CD4-positive, alpha-beta T cell (primary cell): ENCODE measurements at regions of chr19 and their contacts with region 1.

Region 1: DNA sequence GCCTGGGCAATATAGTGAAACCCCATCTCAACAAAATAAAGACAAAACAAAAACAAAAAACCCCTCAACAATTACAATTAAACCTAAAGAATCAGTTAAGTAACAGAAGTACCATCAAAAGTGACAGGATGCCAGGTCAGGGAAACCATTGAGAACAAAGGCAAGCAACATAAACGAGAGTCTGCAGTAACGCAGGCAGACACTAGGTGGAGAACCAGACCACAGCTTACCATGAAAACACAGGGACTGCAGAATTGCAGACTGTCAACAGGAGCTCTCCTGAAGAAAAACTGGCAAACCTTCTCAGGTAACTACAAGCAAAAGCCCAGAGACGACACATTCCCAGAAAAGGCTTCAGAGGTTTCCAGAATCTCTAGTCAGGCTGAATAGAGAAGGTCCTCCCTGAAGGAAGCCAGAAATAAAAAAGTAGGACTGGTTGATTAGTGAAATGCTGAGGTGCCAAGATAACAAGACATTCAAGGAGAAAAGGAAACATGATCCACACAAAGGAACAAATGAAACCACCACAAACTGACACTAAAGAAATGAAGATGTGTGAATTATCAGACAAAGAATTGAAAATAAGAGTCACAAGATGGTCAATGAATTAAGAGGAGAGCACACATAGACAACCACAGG is 2.2 kb upstream of the ZNF665 start:
- DNase-seq: peak; percentile 53 to 89 (median 66)
- ATAC-seq: peak; percentile 59
- H3K4me3 ChIP-seq: no peak overlapping the region
- H3K4me3 Mint-ChIP-seq: peak overlapping the region; percentile 95
- H3K27ac ChIP-seq: no peak overlapping the region
- H3K27ac Mint-ChIP-seq: peak overlapping the region; percentile 92
- H3K4me1 ChIP-seq: peaks cover 28% of the 10 kb centered on the region
- H3K4me1 Mint-ChIP-seq: peaks cover 42% of the 10 kb centered on the region
- H3K27me3 ChIP-seq: peaks cover 0 to 2% of the 10 kb centered on the region in 2 experiments
- H3K27me3 Mint-ChIP-seq: no peaks in the 10 kb centered on the region
- CTCF ChIP-seq: peak; percentile 97

Region 2: DNA sequence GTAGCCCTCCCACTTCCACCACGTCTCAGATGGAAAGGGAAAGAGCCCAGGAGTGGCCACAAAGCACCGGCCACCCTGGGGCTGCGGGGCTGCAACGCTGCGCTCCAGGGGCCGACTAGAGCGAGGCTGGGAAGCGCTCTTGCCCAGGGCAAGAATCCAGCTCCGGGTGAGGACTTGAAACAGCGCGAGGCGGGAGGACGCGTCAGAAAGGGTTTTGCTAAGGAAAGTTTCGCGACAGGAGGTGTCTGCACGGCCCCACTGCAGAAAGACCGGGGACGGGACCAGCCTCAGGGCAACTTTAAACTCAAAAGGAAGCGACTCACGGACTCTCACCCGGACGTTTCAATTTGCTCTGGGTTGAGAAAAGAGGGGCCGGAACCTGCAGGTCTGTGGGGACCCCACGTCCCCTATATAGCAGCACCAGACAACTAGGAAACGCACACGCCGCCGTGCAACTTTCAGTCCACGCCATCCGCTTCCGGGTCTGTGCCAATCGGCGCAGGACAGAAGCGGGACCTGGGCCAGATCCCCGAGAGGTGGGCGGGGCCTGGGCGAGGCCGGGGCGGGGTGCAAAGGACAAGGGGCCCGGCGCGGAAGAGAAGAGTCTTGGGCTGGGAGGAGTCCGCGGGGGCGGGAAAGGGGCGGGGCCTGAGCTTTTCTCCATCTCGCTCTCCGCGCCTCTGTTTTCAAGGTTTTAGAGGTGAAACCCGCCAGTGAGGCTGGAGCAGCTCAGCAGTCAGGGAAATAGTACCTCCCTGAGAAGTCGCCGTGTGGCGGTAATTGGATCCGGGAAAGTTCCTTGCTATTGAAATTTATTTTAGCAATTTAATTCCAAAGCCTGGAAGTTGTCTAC is 232.8 kb before region 1 on chr19 and contains the start of gene ZNF816:
- CTCF ChIA-PET with region 1: interaction called, 3 read pairs
- POLR2A ChIA-PET with region 1: no interaction called
- intact Hi-C with region 1: loop called in 1 of 2 experiments (anchors 1 kb)
- DNase-seq: peak; percentile 97 to 100 (median 99)
- ATAC-seq: peak; percentile 99
- H3K4me3 ChIP-seq: peak within 1 kb of the TSS; percentile 78
- H3K4me3 Mint-ChIP-seq: peak within 1 kb of the TSS; percentile 97
- H3K27ac ChIP-seq: peak within 1 kb of the TSS; percentile 63 to 68
- H3K27ac Mint-ChIP-seq: peak within 1 kb of the TSS; percentile 97
- H3K4me1 ChIP-seq: peaks cover 20% of the 10 kb centered on the region
- H3K4me1 Mint-ChIP-seq: peaks cover 36% of the 10 kb centered on the region
- H3K27me3 ChIP-seq: no peaks in the 10 kb centered on the region
- H3K27me3 Mint-ChIP-seq: no peaks in the 10 kb centered on the region
- CTCF ChIP-seq: no peak
- total RNA-seq, gene ZNF816: 3.6 to 5.5 TPM

Region 3: DNA sequence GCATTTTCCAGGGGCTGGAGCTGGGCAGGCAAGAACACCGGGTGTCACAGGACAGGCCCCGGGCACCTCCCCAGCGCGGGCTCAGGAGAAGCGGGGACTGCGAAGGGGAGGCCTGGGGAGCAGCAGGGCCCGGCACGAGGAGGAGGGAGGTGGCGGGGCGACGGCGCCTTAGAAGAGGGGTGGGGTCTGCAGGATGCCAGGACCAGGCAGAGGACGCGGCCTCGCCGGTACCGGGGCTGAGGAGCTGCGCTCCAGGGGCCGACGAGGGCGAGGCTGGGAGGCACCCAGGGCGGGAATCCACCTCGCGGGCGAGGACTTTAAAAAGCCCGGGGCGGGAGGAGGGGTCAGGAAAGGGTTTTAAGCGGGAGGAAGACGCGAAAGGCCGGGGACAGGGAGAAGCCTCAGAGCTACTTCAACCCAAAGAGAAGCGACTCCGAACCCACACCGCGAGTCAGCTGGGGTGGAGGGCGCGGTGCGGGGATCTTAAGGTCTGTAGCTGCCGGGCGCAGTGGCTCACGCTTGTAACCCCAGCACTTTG is 37.2 kb before region 1 on chr19:
- CTCF ChIA-PET with region 1: interaction called, 4 read pairs
- POLR2A ChIA-PET with region 1: interaction called, 7 read pairs
- intact Hi-C with region 1: loop called in 1 of 2 experiments (anchors 1 kb)
- DNase-seq: peak in 13 of 14 experiments; percentile 1 to 66 (median 9)
- ATAC-seq: peak; percentile 33
- H3K4me3 ChIP-seq: peak overlapping the region; percentile 71
- H3K4me3 Mint-ChIP-seq: peak overlapping the region; percentile 92
- H3K27ac ChIP-seq: peak overlapping the region; percentile 44 to 56
- H3K27ac Mint-ChIP-seq: peak overlapping the region; percentile 82
- H3K4me1 ChIP-seq: peaks cover 19% of the 10 kb centered on the region
- H3K4me1 Mint-ChIP-seq: peaks cover 26% of the 10 kb centered on the region
- H3K27me3 ChIP-seq: peaks cover 0 to 3% of the 10 kb centered on the region in 2 experiments
- H3K27me3 Mint-ChIP-seq: no peaks in the 10 kb centered on the region
- CTCF ChIP-seq: no peak

Region 4: GRCh38 chr19:53365134-53365898 is 169.9 kb after region 1 on chr19 and contains the start of gene ZNF525:
- CTCF ChIA-PET with region 1: no interaction called
- POLR2A ChIA-PET with region 1: no interaction called
- intact Hi-C with region 1: loop called (anchors 1 to 5 kb)
- DNase-seq: peak; percentile 95 to 99 (median 97)
- ATAC-seq: peak; percentile 99
- H3K4me3 ChIP-seq: peak within 1 kb of the TSS; percentile 74
- H3K4me3 Mint-ChIP-seq: peak within 1 kb of the TSS; percentile 96
- H3K27ac ChIP-seq: peak within 1 kb of the TSS; percentile 74 to 77
- H3K27ac Mint-ChIP-seq: peak within 1 kb of the TSS; percentile 91
- H3K4me1 ChIP-seq: peaks cover 19% of the 10 kb centered on the region
- H3K4me1 Mint-ChIP-seq: peaks cover 32% of the 10 kb centered on the region
- H3K27me3 ChIP-seq: no peaks in the 10 kb centered on the region
- H3K27me3 Mint-ChIP-seq: no peaks in the 10 kb centered on the region
- CTCF ChIP-seq: peak; percentile 55
- total RNA-seq, gene ZNF525: 13.5 to 16.3 TPM

Region 5: DNA sequence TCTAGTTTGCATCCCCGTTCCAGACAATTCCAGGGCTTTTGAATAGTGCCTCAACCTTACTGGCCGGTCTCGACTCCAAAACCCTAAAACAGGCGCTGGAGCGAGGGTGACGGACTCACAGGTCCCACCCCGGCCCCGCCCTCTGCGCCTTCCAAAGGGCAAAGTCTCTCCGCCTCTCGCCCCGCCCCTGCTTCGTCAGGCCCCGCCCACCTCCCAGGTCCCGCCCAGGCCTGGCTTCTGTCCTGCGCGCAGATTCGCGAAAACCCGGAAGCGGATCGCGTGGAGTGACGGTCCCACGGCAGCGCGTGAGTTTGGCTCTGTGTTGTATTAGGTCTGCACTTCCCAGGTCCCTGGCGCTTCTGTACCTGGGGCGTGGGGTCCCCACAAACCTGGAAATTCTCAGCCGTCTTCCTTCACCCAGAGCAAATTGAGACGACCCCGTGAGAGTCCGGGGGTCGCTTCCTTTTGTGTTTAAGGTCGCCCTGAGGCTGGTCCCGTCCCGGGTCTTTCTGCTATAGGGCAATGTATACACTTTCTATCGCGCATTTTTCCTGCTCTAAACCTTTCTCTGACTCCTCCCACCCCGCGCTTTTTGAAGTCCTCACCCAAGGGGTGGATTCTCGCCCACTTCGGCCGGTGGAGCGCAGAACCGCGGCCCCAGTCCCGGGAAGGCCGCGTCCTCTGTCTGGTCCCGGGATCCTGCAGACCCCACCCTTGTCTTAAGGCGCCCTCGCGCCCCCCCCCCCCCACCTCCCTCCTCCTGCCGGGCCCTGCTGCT is 272.3 kb after region 1 on chr19 and contains the start of gene ZNF813:
- CTCF ChIA-PET with region 1: no interaction called
- POLR2A ChIA-PET with region 1: no interaction called
- intact Hi-C with region 1: loop called in 1 of 2 experiments (anchors 5 kb)
- DNase-seq: peak; percentile 93 to 99 (median 96)
- ATAC-seq: peak; percentile 97
- H3K4me3 ChIP-seq: peak within 1 kb of the TSS; percentile 74
- H3K4me3 Mint-ChIP-seq: peak within 1 kb of the TSS; percentile 96
- H3K27ac ChIP-seq: peak within 1 kb of the TSS; percentile 21 to 60
- H3K27ac Mint-ChIP-seq: peak within 1 kb of the TSS; percentile 89
- H3K4me1 ChIP-seq: peaks cover 15% of the 10 kb centered on the region
- H3K4me1 Mint-ChIP-seq: peaks cover 35% of the 10 kb centered on the region
- H3K27me3 ChIP-seq: peaks cover 0 to 5% of the 10 kb centered on the region in 2 experiments
- H3K27me3 Mint-ChIP-seq: peaks cover 12% of the 10 kb centered on the region
- CTCF ChIP-seq: no peak
- total RNA-seq, gene ZNF813: 2.0 to 2.7 TPM